ENCODE measurements at regions of chr20 and their contacts with region 1.

Region 1: GRCh38 chr20:4820806-4821518 is 99.3 kb downstream of the PRND start:
- DNase-seq: no peak
- ATAC-seq: no peak

Region 2: DNA sequence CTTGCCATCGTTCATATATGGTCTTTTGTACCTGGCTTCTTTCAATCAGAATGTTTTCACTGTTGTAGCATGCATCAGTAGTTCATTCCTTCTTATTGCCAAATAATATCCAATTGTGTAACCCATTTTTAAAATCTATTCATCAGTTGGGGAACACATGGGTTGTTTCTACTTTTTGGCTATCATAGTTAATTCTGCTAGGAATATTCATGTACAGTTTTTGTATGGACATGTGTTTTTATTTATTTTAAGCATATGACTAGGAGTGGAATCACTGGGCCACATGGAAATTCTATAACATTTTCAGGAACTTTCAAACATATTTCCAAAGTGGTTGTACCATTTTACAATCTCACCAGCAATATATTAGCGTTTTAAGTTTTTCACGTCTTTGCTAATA is 286.6 kb before region 1 on chr20:
- intact Hi-C with region 1: no loop called
- DNase-seq: no peak
- ATAC-seq: no peak

Region 3: DNA sequence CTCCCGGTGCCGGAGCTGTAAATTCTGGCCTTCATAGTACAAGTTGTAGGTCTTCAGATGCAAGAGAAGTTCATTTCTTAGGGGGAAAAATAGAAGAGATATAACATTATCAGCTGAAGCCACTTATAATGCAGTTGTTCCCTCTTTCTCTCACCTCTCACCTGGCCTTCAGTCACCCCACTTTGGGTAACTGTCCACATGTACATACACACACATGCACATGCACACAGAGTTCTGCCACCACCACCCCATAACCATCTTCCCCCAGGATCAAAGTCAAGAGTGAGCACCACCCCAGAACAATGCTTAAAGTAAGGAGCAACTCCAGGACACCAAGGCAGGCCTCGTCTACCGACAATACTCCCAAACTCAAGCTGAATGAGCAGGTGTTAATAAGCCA is 23.0 kb before region 1 on chr20:
- intact Hi-C with region 1: loop called in 1 of 2 experiments (anchors 2 kb)
- DNase-seq: no peak
- ATAC-seq: no peak

Region 4: DNA sequence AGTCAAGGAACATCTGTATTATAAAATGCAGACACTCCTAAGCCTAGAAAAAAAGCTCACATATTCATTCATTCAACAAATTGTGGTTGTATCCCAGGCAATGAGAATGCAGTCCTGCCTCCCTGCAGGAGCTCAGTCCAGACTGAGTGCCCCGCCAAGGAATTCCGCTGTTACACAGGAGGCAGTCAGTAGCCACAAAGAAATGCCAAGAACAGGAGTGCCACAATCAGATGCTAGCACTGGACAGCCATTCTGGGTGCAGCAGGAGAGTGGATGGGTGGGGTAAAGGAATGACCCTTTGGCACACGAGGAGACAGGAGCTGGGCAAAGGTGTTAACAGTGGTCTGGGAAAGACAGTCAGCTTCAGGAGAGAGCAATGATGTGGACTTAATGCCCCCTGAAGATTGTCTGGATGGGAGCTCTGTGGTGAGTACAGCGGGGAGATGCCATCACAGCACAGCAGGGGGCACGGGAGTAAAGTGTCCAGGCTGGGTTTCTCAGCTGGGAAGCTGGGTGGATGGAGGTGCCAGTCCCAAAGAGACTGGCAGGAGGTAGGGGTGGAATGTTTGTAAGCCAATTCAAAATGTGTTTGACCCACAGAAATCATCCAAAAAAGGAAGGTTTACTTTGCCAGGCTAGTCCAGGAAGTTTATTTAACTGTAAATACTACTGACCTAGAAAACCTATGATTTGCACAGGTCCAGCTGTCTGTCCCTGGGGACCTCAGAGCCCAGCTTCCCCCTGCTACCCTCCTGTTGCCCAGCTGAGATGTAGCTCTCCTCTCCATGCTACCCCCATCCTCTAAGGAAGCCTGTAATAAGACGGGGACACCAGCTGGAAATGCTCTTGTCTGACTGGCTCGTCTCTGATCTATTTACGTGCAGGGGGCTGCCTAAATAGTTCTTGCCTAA is 96.3 kb after region 1 on chr20:
- intact Hi-C with region 1: no loop called
- DNase-seq: no peak
- ATAC-seq: peak; percentile 34 to 63

Region 5: DNA sequence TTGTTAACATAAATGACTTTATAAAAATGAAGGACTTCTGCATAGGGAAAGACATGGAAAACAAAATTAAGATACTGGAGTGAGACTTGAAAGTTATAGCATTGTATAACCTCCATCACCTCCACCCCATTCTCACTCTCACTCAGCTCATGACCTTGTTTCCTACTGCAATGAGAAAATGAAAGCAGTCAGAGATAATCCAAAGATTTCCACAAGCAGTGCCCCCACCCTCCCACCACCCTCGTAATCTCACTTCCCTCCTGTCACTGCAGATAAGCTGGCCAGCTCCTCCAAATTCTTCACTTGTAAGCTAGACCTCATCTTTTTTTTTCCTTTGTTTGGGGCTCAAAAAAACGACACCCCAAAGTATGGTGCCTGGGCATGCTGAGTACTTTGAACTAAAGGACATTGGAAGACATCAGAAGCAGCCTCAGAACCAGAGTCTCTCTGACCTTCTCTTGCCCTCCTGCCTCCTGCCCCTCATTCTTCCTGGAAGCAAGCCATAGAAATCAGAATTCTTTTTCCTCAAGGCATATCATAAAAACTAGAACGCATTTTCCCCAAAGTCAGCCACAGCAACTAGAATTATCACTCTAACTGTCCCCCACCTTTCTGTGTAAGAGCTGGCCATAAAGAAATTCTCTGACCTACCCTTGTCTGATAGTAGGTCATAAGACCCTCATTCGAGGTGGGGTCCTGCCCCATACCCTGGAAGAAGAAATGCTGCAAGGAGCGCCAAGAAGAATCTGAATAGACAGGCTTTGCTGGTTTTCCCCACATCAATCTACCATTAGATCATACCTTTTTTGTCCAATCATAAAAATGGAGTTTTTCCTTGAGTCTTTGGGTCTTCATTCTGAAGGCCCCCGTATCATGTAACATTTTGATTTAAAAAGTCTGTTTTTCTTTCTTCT is 548.9 kb after region 1 on chr20:
- intact Hi-C with region 1: no loop called
- DNase-seq: no peak
- ATAC-seq: no peak